ENCODE measurements at regions of chr20 and their contacts with region 1.

Region 1: DNA sequence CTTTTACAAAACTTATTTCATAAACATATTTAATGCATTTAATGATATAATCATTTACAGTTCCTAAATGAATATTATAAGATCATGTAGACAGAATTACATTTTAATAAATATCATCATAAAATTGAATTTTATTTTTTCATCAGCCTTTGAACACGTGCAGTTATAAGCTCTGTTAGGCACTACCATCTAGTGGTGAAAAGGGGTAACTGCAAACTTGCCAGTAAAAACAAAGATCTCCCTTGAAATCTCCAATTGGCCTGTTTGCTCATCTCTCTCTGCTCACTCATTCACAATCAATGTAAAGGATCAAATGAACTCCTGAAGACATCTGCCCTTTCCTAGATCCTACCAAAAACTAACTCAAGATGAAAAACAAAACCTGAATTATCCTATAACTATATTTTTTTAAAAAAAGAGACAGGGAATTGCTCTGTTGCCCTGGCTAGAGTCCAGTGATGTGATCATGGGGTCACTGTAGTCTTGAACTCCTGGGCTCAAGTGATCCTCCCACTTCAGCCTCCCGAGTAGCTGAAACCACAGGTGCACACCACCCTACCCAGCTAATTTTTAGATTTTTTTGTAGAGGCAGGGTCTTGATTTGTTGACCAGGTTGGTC is 31.7 kb downstream of the SAMHD1 start:
- DNase-seq: no peak
- H3K4me3 ChIP-seq: no peak overlapping the region
- CTCF ChIP-seq: peak; percentile 70

Region 2: GRCh38 chr20:36562724-36563123 is 357.1 kb before region 1 on chr20:
- CTCF ChIA-PET with region 1: interaction called, 10 read pairs
- POLR2A ChIA-PET with region 1: no interaction called
- DNase-seq: no peak
- H3K4me3 ChIP-seq: no peak overlapping the region
- CTCF ChIP-seq: no peak

Region 3: GRCh38 chr20:36666181-36666740 is 253.6 kb before region 1 on chr20:
- CTCF ChIA-PET with region 1: interaction called, 10 read pairs
- POLR2A ChIA-PET with region 1: no interaction called
- DNase-seq: peak; percentile 16
- H3K4me3 ChIP-seq: no peak overlapping the region
- CTCF ChIP-seq: no peak

Region 4: GRCh38 chr20:36792422-36792821 is 127.4 kb before region 1 on chr20:
- CTCF ChIA-PET with region 1: interaction called, 12 read pairs
- POLR2A ChIA-PET with region 1: no interaction called
- DNase-seq: no peak
- H3K4me3 ChIP-seq: no peak overlapping the region
- CTCF ChIP-seq: peak; percentile 67

Region 5: DNA sequence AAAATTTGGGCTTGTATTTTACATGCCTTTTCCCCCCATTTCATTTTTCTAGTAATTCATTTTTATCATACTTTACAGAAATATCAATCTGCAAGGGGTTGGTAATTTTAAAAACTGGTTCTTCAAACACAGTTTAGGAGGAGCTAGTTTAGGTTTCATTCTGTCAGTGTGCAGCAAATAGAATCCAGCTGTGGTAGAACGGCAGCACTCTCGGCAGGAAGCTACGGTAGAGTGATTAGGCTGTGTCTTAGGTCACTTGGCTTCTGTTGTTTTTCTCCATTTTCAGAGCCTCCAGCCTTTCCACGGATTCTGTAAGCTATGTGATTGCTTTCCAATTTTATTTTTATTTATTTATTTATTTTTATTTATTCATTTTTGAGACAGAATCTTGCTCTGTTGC is 11.2 kb before region 1 on chr20:
- CTCF ChIA-PET with region 1: interaction called, 32 read pairs
- POLR2A ChIA-PET with region 1: no interaction called
- DNase-seq: no peak
- H3K4me3 ChIP-seq: no peak overlapping the region
- CTCF ChIP-seq: no peak

Region 6: GRCh38 chr20:36932476-36933426 is 12.9 kb after region 1 on chr20:
- CTCF ChIA-PET with region 1: interaction called, 36 read pairs
- POLR2A ChIA-PET with region 1: no interaction called
- DNase-seq: no peak
- H3K4me3 ChIP-seq: no peak overlapping the region
- CTCF ChIP-seq: no peak

Region 7: DNA sequence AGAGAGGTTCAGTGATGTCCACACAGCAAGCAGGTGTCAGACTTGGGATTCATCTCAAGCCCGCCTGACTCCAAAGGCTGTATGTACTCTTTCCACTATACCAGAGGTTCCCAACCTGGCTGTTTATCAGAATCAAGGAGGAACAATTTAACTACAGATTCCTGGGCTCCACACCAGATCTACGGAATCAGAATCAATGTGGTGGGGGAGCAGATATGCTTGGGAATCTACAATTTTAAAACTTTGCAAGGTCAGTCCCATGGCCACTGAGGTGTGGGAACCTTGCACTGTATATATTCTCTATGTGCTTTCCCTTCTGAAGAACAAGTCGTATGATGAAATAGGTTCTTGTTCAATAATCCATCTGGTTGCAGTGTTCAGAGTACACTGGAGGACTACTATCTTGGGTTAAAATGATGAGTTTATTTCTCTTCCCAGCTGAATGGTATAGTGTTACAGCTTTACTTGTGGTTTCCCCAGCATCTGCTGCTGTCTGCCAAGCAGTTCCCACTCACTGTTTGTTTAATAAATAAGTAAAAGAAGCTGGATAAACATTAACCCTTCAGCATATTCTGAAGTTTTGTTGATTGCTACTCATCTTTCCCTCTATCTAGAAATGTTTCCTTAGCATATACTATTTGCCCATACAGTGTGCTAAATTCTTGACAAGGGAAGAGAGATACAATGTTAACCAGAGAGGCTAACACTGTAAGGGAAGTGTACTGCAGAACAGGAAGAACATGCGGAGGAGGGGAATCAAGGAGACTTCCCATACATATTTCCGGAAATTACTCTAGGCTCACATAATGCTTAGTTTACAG is 1103.6 kb after region 1 on chr20:
- CTCF ChIA-PET with region 1: no interaction called
- POLR2A ChIA-PET with region 1: no interaction called
- DNase-seq: peak; percentile 67
- H3K4me3 ChIP-seq: no peak overlapping the region
- CTCF ChIP-seq: no peak